Dorsolateral prefrontal cortex (tissue), 120 donors: ENCODE measurements at regions of chr12 and their contacts with region 1.

Region 1: DNA sequence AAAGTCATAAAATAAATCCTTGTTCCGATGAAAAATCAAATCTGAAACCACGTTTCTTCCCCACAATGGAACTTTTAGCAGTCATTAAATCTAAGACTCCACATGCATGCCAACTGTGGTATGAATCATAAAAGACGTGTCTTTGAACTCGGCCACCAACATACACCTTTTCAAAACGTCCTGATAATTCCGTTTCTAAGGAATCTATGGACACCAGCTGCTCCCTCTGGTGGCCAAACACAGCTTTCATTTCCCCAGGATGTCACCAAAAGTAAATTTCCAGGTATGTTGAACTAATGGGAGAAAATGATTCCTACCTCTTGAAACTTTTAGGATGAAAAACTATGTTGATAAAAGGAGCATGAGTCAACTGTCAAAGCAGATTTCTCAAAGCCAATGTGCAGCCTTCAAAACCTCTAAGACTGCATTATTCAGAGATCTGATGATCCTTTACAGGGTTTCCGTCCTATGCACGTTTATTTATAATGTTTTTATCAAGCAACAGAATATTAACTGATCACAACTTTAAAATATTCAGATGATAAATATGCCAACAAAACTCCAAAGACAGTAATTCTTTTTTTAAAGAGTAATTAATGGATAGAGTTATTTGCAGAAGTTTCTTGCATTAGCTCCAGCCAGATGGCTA is 96.2 kb downstream of the CIT start:
- DNase-seq: peak in 4 of 10 donors; percentile 46 to 63 (median 54)
- H3K4me3 ChIP-seq: peak overlapping the region in 10 of 59 donors; percentile 3 to 56 (median 19)
- H3K27ac ChIP-seq: peak overlapping the region in 3 of 59 donors; percentile 28 to 47 (median 40)
- H3K27me3 ChIP-seq: no peaks in the 10 kb centered on the region
- CTCF ChIP-seq: peak; percentile 68 to 94 (median 80)

Region 2: GRCh38 chr12:119667577-119668323 is 113.2 kb before region 1 on chr12 and contains the start of gene PRKAB1:
- intact Hi-C with region 1: loop called in 1 of 2 experiments (anchors 10 kb)
- DNase-seq: peak; percentile 91 to 97 (median 96)
- H3K4me3 ChIP-seq: peak within 1 kb of the TSS; percentile 58 to 100 (median 86)
- H3K27ac ChIP-seq: peak within 1 kb of the TSS; percentile 48 to 97 (median 90)
- H3K27me3 ChIP-seq: no peaks in the 10 kb centered on the region
- CTCF ChIP-seq: peak; percentile 72 to 99 (median 94)
- total RNA-seq, gene PRKAB1: 17.0 to 44.5 (median 30.2) TPM

Region 3: GRCh38 chr12:119704065-119704747 is 76.7 kb before region 1 on chr12:
- intact Hi-C with region 1: loop called in 1 of 2 experiments (anchors 10 kb)
- DNase-seq: peak in 3 of 10 donors; percentile 45 to 61 (median 56)
- H3K4me3 ChIP-seq: no peak overlapping the region
- H3K27ac ChIP-seq: peak overlapping the region in 57 of 59 donors; percentile 1 to 88 (median 65)
- H3K27me3 ChIP-seq: no peaks in the 10 kb centered on the region
- CTCF ChIP-seq: peak in 23 of 56 donors; percentile 14 to 51 (median 29)

Region 4: GRCh38 chr12:119725523-119725922 is 55.4 kb before region 1 on chr12:
- intact Hi-C with region 1: no loop called
- DNase-seq: peak in 2 of 10 donors; percentile 53 to 63
- H3K4me3 ChIP-seq: no peak overlapping the region
- H3K27ac ChIP-seq: peak overlapping the region in 49 of 59 donors; percentile 22 to 89 (median 72)
- H3K27me3 ChIP-seq: no peaks in the 10 kb centered on the region
- CTCF ChIP-seq: no peak

Region 5: GRCh38 chr12:119949145-119949544 is 168.2 kb after region 1 on chr12:
- intact Hi-C with region 1: no loop called
- DNase-seq: no peak
- H3K4me3 ChIP-seq: no peak overlapping the region
- H3K27ac ChIP-seq: no peak overlapping the region
- H3K27me3 ChIP-seq: no peaks in the 10 kb centered on the region
- CTCF ChIP-seq: no peak